ENCODE measurements at regions of chr12 and their contacts with region 1.

Region 1: DNA sequence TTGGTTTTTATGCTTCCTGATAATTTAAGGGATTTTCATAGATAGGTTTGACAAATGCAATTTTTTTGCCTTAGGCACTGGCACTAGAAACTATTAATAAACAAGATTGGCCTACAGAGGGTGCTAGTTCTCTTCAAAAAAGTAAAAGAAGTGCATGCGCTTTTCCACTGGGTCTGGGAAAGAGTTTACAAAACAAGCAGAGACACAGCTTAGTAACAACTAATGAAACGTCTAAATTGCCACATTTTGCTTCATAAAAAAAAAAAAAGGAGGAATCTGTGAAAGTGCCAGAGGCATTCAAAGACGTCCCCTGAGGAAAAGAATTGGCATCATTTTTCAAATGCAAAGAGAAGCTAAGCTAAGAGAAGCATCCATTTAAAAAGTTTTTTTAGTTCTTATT is 58.3 kb upstream of the EEA1 start:
- DNase-seq: no peak
- CTCF ChIP-seq: peak; percentile 57

Region 2: DNA sequence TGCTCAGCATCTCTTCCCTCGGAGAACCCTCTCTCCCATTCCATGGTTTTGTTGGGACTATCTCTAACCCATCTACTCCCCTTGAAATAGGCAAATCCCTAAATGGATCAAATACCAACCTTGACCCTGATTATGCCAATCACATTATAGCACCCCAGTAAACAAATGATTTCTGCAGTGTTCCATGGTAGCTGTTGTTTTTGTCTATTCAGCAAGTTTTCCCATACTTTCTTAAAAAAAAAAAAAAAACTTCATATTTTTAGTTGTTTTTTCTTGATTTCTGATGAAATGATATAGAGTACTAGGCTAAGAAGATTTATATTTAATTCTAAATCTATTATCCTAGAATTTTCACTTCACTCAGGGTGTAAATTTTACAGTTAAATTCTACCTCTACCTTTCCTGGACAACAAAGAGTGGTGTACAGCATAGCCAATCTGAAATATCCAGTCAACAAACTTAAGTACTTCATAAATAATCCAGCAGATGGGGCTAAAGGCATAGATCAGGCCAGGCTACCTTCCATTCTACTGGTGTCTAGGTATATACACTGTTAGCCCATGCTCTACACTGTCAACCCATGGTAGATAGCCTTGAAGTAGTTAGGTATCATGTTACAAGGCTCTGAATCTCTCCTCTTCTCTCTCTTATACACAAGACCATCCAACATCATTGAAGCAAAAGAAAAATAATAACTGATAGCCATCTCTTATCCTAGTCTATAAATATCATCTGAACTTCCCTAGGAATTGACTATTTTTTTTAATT is 202.4 kb before region 1 on chr12:
- in situ Hi-C with region 1: loop called (anchors 5 kb)
- DNase-seq: peak; percentile 57
- CTCF ChIP-seq: peak; percentile 55

Region 3: GRCh38 chr12:93098077-93098476 is 110.7 kb after region 1 on chr12:
- in situ Hi-C with region 1: no loop called
- DNase-seq: no peak
- CTCF ChIP-seq: peak; percentile 58

Region 4: GRCh38 chr12:93205361-93205760 is 218.0 kb after region 1 on chr12:
- in situ Hi-C with region 1: no loop called
- DNase-seq: no peak
- CTCF ChIP-seq: no peak

Region 5: GRCh38 chr12:93403988-93404803 is 416.8 kb after region 1 on chr12:
- in situ Hi-C with region 1: loop called (anchors 10 kb)
- DNase-seq: no peak
- CTCF ChIP-seq: no peak

Region 6: DNA sequence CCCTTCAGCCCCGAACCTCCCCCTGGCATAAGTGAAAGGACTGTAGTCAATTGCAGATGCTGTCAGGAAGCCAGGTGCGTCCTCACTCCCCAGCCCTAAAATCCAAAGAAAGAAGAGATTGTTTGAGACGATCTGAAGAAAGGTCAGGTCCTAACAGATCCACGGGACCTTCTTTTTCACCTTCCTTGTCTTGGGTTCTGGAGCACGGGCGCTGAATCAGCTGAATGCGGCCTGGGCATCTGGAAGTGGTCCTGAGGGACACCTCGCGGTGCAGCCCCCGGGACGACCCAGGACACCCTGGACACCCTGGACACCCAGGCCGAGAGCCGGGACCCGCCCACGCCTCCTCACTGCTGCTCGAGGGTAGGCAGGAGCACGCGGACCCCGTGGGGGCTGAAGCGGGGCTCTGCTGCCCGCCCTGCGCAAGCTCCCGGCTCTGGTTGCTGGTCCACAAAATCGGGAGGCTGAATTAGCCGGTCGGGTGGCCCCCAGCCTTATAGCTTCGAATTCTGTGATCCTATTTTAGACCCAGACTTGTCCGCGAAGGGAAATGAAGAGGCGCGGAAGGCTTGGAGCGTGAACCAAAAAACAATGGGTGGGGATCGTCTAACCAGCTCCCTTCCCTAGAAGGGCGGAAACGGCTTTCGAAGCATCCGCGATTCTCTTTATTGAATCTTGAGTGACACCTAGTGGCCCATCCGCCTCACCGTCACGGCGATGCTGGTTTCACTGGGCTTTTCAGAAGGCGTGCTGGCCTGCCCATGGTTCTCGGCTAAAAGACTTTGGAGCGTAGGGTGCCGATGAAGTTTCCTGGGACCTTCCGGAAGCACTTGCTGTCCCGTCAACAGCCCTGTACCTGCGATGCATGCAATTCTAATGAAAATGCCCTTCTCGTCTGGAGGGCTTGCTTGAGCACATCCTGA is 1114.6 kb after region 1 on chr12:
- in situ Hi-C with region 1: loop called (anchors 25 kb)
- DNase-seq: peak; percentile 85
- CTCF ChIP-seq: peak; percentile 87